Uterus (tissue), 4 donors: ENCODE measurements at regions of chr7 and their contacts with region 1.

Region 1: GRCh38 chr7:4010061-4010605 is 672.0 kb upstream of the FOXK1 start:
- DNase-seq: no peak
- H3K4me3 ChIP-seq: no peak overlapping the region
- H3K27ac ChIP-seq: no peak overlapping the region
- H3K4me1 ChIP-seq: no peaks in the 10 kb centered on the region
- H3K27me3 ChIP-seq: no peaks in the 10 kb centered on the region
- CTCF ChIP-seq: no peak
- POLR2A ChIP-seq: no peak

Region 2: DNA sequence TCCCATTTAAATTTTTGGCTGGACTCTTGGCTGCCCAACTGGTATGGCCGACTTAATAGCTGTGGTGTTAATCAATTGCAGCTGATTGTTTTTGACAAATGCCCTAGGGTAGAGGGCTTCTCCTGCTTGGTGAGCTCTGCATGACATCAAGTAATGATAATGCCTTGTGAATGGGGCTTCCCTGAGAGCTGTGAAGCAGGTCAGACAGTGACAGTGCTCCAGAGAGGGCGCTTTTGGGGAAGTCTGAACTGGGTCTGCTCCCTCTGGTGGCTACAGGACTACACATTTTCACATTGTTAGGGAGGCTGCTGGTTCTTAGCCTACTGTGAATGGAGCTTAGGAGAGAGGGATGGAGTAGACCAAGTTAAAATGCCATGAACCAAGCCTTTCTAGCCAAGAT is 610.3 kb before region 1 on chr7:
- intact Hi-C with region 1: loop called (anchors 5 kb)
- DNase-seq: no peak
- H3K4me3 ChIP-seq: no peak overlapping the region
- H3K27ac ChIP-seq: no peak overlapping the region
- H3K4me1 ChIP-seq: no peaks in the 10 kb centered on the region
- H3K27me3 ChIP-seq: no peaks in the 10 kb centered on the region
- CTCF ChIP-seq: no peak
- POLR2A ChIP-seq: no peak

Region 3: DNA sequence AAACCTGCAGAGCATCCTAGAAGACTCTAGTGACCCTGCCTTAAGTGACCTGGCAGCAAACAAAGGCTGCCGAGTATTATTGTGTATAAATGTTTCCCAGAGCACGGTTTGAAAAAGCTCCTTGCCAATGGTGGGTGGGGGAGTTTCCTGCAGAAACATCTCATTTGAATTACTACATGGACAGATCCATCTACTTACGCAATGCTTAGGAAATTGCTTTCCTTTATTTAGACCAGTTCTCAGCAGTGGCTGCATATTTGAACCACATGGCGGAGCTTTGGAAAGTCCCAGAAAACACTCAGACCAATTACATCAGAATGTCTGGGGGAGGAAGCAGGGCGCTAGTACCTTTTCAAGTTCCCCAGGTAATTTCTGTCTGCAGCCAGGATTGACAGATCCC is 148.2 kb before region 1 on chr7:
- intact Hi-C with region 1: no loop called
- DNase-seq: peak; percentile 70 to 73
- H3K4me3 ChIP-seq: no peak overlapping the region
- H3K27ac ChIP-seq: peak overlapping the region; percentile 34 to 67
- H3K4me1 ChIP-seq: peaks cover 0 to 8% of the 10 kb centered on the region in 2 donors
- H3K27me3 ChIP-seq: no peaks in the 10 kb centered on the region
- CTCF ChIP-seq: peak in 1 of 4 experiments; percentile 31
- POLR2A ChIP-seq: no peak